T-cell (primary cell): ENCODE measurements at regions of chr20 and their contacts with region 1.

Region 1: DNA sequence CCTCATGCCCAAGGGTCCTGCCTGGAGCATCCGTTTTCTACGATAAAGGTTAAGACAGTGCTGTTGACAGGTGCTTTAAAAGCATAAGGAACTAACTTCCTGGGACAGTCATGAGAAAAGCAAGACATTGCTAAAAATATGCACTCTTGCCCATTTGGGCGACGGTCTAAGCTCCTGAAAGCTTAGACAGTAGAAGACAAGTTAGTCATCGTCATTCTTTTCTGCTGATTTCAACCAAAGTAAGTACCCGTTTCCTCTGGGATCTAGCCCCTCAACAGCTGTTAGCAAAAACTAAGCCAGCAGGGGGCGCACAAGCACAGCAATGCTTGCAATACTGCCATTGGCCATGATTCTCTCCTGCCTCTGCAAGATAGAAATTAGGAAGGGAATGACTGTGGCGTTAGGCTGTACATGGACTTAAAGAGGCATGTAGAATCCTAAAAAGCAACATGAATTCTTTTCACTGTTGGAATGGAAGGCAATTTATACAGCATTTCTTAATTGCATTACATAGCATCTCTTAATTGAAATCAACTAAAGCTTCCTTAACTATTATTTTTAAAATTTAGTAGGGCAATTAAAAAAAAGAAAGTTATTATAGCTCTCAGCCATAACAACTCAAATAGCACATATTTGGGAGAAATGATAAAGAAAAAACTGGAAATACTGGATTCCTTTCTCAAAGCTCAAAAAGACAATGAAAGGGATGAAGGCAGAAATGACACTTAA is 147.8 kb upstream of the RALGAPA2 start:
- DNase-seq: peak; percentile 31 to 84 (median 73)
- ATAC-seq: peak; percentile 59 to 70 (median 64)
- H3K4me3 ChIP-seq: no peak overlapping the region
- H3K4me3 Mint-ChIP-seq: no peak overlapping the region
- H3K27ac ChIP-seq: no peak overlapping the region
- H3K27ac Mint-ChIP-seq: no peak overlapping the region
- H3K4me1 ChIP-seq: peaks cover 0 to 3% of the 10 kb centered on the region in 2 experiments
- H3K4me1 Mint-ChIP-seq: no peaks in the 10 kb centered on the region
- H3K27me3 ChIP-seq: peaks cover 0 to 9% of the 10 kb centered on the region in 2 experiments
- H3K27me3 Mint-ChIP-seq: peaks cover 24 to 34% of the 10 kb centered on the region in 2 donors

Region 2: GRCh38 chr20:20933142-20933958 is 73.1 kb after region 1 on chr20:
- CTCF ChIA-PET with region 1: no interaction called
- POLR2A ChIA-PET with region 1: no interaction called
- DNase-seq: no peak
- ATAC-seq: no peak
- H3K4me3 ChIP-seq: no peak overlapping the region
- H3K4me3 Mint-ChIP-seq: no peak overlapping the region
- H3K27ac ChIP-seq: no peak overlapping the region
- H3K27ac Mint-ChIP-seq: no peak overlapping the region
- H3K4me1 ChIP-seq: no peaks in the 10 kb centered on the region
- H3K4me1 Mint-ChIP-seq: no peaks in the 10 kb centered on the region
- H3K27me3 ChIP-seq: peaks cover 0 to 4% of the 10 kb centered on the region in 2 experiments
- H3K27me3 Mint-ChIP-seq: peaks cover 0 to 14% of the 10 kb centered on the region in 2 donors

Region 3: GRCh38 chr20:21505161-21505809 is 645.0 kb after region 1 on chr20:
- CTCF ChIA-PET with region 1: interaction called, 13 to 25 read pairs
- POLR2A ChIA-PET with region 1: no interaction called
- DNase-seq: peak; percentile 35 to 81 (median 71)
- ATAC-seq: peak; percentile 58 to 68 (median 65)
- H3K4me3 ChIP-seq: peak overlapping the region; percentile 21 to 64
- H3K4me3 Mint-ChIP-seq: peak overlapping the region; percentile 31 to 68 (median 50)
- H3K27ac ChIP-seq: no peak overlapping the region
- H3K27ac Mint-ChIP-seq: no peak overlapping the region
- H3K4me1 ChIP-seq: peaks cover 5 to 28% of the 10 kb centered on the region in 2 experiments
- H3K4me1 Mint-ChIP-seq: peaks cover 19 to 34% (median 32%) of the 10 kb centered on the region in 3 donors
- H3K27me3 ChIP-seq: peaks cover 12 to 78% of the 10 kb centered on the region in 2 experiments
- H3K27me3 Mint-ChIP-seq: peaks cover 52 to 65% of the 10 kb centered on the region in 2 donors

Region 4: DNA sequence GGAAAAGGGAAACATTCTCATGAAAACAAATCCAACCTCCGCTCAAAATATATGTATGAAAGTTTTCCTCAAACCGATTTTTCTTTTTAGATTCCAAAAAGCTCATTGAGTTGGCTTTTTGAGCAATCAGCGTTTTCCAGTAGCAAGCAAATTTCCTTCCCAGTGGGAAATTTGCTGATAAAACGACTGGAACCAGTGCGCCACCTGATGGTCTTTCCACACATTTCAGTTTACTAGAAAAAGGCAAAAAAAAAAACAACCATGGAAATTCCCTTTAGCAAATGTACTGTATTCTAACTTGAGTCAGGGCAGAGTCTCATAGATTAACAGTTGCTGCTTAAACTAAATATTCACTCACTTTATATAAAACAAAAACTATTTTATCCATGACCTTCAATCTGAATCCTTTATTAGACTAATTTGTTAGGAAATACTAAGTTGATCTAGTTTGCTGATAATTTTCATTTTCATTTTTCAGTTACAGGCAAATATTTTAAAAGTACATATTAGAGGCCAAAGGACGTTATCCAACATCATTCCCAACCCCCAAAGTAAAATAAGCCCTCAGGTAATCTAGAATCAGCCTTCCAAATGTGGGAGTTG is 1452.6 kb after region 1 on chr20:
- CTCF ChIA-PET with region 1: interaction called in 1 of 2 experiments, 13 read pairs
- POLR2A ChIA-PET with region 1: no interaction called
- DNase-seq: no peak
- ATAC-seq: no peak
- H3K4me3 ChIP-seq: no peak overlapping the region
- H3K4me3 Mint-ChIP-seq: no peak overlapping the region
- H3K27ac ChIP-seq: no peak overlapping the region
- H3K27ac Mint-ChIP-seq: no peak overlapping the region
- H3K4me1 ChIP-seq: no peaks in the 10 kb centered on the region
- H3K4me1 Mint-ChIP-seq: no peaks in the 10 kb centered on the region
- H3K27me3 ChIP-seq: no peaks in the 10 kb centered on the region
- H3K27me3 Mint-ChIP-seq: peaks cover 0 to 4% of the 10 kb centered on the region in 2 donors